ENCODE measurements at regions of chr11 and their contacts with region 1.

Region 1: DNA sequence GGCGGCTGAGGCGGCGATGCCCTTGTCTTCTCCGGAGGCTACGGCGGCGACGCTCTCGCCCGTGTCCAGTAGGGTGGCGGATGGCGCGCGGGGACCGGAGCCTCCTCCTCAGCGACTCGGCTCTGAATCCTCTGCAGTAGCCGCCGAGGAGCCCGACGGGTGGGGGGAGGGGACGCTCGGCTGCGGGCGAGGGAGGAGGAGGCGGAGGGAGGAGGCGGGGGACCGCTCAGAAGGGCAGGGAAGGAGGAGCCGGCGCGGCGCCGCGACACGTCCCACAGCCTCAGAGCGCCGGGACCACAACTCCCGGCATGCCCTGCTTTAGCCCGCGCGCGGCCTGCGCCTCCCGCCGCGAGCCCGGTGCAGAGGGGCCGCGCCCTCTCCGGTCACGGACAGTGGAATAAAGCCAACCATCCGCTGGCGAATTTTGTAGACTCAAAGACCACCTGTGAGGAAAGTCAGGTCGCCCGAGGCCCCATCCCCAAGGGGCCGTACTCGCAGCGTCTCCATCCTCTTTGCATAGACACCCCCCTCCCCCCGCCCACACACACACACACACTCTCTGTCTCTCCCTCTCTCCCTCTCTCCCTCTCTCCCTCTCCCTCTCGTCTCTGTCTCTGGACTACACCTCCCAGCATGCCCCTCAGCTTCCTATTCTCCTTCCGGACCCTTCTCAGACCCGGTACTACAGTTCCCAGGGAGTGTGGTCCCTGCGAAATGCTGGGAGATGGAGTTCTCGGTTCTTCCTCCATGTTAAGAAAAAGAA is at the start of gene FAM168A:
- DNase-seq: peak; percentile 88
- H3K4me3 Mint-ChIP-seq: peak within 1 kb of the TSS; percentile 93
- H3K27ac Mint-ChIP-seq: peak within 1 kb of the TSS; percentile 94
- H3K4me1 Mint-ChIP-seq: peaks cover 37% of the 10 kb centered on the region
- H3K27me3 Mint-ChIP-seq: peaks cover 2% of the 10 kb centered on the region
- total RNA-seq, gene FAM168A: 19.4 and 19.5 TPM in 2 replicates

Region 2: GRCh38 chr11:73376160-73376802 is 221.9 kb before region 1 on chr11 and contains the start of gene RELT:
- intact Hi-C with region 1: loop called (anchors 1 kb)
- DNase-seq: peak; percentile 94
- H3K4me3 Mint-ChIP-seq: peak within 1 kb of the TSS; percentile 91
- H3K27ac Mint-ChIP-seq: peak within 1 kb of the TSS; percentile 90
- H3K4me1 Mint-ChIP-seq: peaks cover 28% of the 10 kb centered on the region
- H3K27me3 Mint-ChIP-seq: no peaks in the 10 kb centered on the region
- total RNA-seq, gene RELT: 34.6 and 37.6 TPM in 2 replicates

Region 3: DNA sequence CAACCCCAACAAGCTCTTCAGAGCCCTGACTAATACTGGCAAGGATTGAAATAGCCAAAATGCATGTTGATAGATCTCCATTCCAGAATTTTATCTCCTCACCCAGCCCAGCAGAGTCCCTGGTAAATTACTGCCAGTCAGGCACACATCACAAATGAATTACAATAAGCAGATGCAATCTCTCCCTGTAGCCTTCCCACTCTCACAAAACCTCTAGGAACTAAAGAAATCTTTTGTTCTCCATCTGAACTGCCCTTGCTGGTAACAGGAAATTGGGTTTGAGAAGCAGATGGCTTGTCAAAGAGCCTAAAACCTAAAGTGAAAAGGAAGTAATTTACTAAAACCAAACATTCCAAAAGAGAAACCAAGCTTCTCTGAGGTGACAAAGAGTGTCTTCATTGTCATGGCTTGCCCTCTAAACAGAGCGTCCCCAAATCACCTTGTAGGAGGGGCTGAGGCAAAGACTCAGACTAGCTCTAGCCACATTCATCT is 59.7 kb before region 1 on chr11:
- intact Hi-C with region 1: loop called (anchors 5 kb)
- DNase-seq: no peak
- H3K4me3 Mint-ChIP-seq: peak overlapping the region; percentile 19
- H3K27ac Mint-ChIP-seq: peak overlapping the region; percentile 82
- H3K4me1 Mint-ChIP-seq: peaks cover 20% of the 10 kb centered on the region
- H3K27me3 Mint-ChIP-seq: no peaks in the 10 kb centered on the region

Region 4: GRCh38 chr11:73625696-73626318 is 27.7 kb after region 1 on chr11:
- intact Hi-C with region 1: no loop called
- DNase-seq: peak; percentile 34
- H3K4me3 Mint-ChIP-seq: no peak overlapping the region
- H3K27ac Mint-ChIP-seq: no peak overlapping the region
- H3K4me1 Mint-ChIP-seq: peaks cover 4% of the 10 kb centered on the region
- H3K27me3 Mint-ChIP-seq: peaks cover 30% of the 10 kb centered on the region

Region 5: DNA sequence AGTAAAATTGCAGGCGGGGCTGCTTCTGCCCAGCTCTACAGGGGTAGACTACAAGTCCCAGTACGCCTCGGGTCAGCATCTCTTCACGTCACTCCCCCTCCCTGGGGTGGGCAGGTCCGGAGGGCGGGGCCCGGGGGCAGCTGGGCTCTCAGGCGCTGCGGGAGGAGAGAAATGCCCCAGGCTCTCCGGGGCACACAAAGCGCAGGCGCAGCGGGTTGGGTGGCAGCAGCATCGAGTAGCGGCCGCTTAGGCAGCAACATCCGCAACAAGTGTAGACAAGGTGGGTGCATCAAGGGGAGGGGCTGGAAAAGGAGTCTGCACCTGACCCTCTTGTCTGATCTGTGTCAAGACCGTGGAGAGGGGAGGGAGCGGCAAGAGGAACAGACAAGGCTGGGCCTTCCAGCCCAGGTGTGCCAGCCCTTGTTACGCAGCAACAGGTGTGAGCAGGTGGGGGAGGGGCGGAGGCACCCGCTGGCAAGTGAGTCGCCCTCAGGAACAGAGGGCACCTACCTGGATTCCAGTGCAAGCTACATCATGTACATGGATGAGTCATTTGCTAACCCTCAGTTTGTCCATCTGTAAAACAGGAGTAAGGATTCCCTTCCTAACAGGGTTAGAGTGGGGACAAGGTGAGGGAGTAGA is 49.4 kb after region 1 on chr11:
- intact Hi-C with region 1: loop called (anchors 1 kb)
- DNase-seq: peak; percentile 84
- H3K4me3 Mint-ChIP-seq: peak overlapping the region; percentile 54
- H3K27ac Mint-ChIP-seq: no peak overlapping the region
- H3K4me1 Mint-ChIP-seq: peaks cover 14% of the 10 kb centered on the region
- H3K27me3 Mint-ChIP-seq: peaks cover 9% of the 10 kb centered on the region

Region 6: GRCh38 chr11:73779084-73779902 is 181.2 kb after region 1 on chr11:
- intact Hi-C with region 1: loop called (anchors 1 kb)
- DNase-seq: peak; percentile 97
- H3K4me3 Mint-ChIP-seq: peak overlapping the region; percentile 90
- H3K27ac Mint-ChIP-seq: peak overlapping the region; percentile 99
- H3K4me1 Mint-ChIP-seq: peaks cover 10% of the 10 kb centered on the region
- H3K27me3 Mint-ChIP-seq: no peaks in the 10 kb centered on the region

Region 7: DNA sequence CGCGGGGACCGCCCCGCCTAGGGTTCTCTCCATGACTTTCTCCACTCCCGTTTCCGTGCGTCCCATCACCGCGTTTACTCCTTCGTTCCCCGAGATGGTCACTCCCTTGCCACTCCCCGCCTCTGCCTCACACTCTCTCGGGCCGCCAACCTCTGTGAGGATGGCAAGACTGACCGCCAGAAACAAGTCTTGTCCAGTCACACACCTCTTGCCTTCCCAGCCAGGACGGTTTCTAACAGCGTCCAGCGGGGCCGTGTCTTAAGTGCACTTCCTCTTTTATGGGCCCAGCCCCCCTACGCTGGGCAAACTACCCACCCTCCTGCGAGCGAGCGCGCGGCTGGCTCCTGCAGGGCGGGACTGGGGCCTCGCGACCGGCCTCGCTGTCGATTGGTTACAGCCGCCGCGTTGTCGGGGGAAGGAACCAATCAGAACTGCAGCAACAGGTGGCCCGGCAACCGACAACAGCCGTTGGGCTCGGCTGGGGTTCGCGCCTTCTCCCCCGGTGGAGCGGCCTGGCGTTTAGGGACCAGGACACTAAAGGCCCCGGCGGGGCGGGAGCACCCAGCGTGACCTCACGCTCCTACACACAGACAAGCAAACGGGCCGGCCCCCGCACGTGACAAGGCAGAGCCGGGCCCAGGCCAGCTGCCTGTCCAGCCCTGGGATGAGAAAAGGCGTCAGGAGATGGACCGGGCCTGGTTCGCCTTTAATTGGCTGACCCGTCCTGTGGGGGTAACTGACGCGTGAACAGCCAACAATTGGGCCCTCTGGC is 385.0 kb after region 1 on chr11:
- intact Hi-C with region 1: loop called (anchors 2 kb)
- DNase-seq: peak; percentile 94
- H3K4me3 Mint-ChIP-seq: peak overlapping the region; percentile 100
- H3K27ac Mint-ChIP-seq: peak overlapping the region; percentile 99
- H3K4me1 Mint-ChIP-seq: peaks cover 55% of the 10 kb centered on the region
- H3K27me3 Mint-ChIP-seq: no peaks in the 10 kb centered on the region

Region 8: GRCh38 chr11:74055938-74056337 is 457.8 kb after region 1 on chr11:
- intact Hi-C with region 1: no loop called
- DNase-seq: no peak
- H3K4me3 Mint-ChIP-seq: no peak overlapping the region
- H3K27ac Mint-ChIP-seq: no peak overlapping the region
- H3K4me1 Mint-ChIP-seq: peaks cover 10% of the 10 kb centered on the region
- H3K27me3 Mint-ChIP-seq: no peaks in the 10 kb centered on the region

Region 9: DNA sequence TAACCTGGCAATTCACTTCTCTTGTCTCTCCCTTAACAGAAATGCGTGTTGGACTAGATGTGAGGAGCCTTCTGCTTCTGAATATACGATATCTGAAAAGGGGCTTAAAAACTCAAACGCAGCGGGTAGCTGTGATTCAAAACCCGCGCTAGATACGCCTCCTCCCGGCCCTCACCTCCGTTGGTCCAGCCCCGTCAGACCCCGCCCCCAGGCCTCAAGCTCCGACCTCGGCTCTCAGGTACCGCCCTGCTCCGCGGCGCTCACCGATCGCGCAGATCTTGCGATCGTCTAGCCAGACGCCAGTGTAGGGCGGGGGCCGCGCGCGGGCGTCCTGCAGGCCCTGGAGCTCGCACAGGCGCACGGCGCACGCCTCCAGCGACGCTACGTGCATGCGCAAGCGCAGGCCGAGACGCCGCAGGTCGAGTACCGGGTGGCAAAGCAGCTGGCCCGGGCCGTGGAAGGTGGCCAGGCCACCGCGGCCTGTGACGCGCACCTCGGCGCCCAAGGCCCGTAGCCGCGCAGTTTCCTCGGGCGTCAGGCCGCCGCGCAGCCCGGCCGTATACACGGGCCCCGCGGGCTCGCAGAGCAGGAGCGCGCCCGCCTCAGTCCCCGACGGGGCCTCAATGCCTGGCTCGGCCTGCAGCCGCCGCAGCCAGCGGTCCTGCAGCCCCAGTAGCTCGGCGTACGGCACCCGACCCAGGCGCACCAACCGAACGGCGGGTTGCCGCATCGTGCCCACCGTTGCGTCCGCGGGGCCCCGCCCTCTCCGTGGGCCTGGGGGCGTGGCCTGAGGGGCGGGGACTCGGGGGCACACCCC is 895.0 kb after region 1 on chr11 and contains the start of gene LIPT2:
- intact Hi-C with region 1: loop called (anchors 5 kb)
- DNase-seq: peak; percentile 96
- H3K4me3 Mint-ChIP-seq: peak within 1 kb of the TSS; percentile 86
- H3K27ac Mint-ChIP-seq: peak within 1 kb of the TSS; percentile 83
- H3K4me1 Mint-ChIP-seq: peaks cover 21% of the 10 kb centered on the region
- H3K27me3 Mint-ChIP-seq: peaks cover 8% of the 10 kb centered on the region
- total RNA-seq, gene LIPT2: 2.7 and 3.4 TPM in 2 replicates

Measured in activated T-helper 1 cell treated with anti-CD3 and anti-CD28 coated beads, Interleukin-12 subunit alpha, Interleukin-12 subunit beta, Interleukin-2, Interleukin-4 antibody, amounts not matched to agents 30 ng/mL and 10 ng/mL and 1 ng/mL, durations not matched to agents 14 hours and 24 hours and 36 hours (primary cell).